Cardiac septum (tissue), 1 donor: ENCODE measurements at regions of chr20 and their contacts with region 1.

Region 1: GRCh38 chr20:21505161-21505809 is 8.6 kb downstream of the NKX2-2 start:
- DNase-seq: peak; percentile 86

Region 2: GRCh38 chr20:20837574-20838021 is 667.7 kb before region 1 on chr20:
- intact Hi-C with region 1: loop called (anchors 2 kb)
- DNase-seq: no peak

Region 3: DNA sequence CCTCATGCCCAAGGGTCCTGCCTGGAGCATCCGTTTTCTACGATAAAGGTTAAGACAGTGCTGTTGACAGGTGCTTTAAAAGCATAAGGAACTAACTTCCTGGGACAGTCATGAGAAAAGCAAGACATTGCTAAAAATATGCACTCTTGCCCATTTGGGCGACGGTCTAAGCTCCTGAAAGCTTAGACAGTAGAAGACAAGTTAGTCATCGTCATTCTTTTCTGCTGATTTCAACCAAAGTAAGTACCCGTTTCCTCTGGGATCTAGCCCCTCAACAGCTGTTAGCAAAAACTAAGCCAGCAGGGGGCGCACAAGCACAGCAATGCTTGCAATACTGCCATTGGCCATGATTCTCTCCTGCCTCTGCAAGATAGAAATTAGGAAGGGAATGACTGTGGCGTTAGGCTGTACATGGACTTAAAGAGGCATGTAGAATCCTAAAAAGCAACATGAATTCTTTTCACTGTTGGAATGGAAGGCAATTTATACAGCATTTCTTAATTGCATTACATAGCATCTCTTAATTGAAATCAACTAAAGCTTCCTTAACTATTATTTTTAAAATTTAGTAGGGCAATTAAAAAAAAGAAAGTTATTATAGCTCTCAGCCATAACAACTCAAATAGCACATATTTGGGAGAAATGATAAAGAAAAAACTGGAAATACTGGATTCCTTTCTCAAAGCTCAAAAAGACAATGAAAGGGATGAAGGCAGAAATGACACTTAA is 645.0 kb before region 1 on chr20:
- intact Hi-C with region 1: loop called (anchors 5 kb)
- DNase-seq: peak; percentile 93

Region 4: DNA sequence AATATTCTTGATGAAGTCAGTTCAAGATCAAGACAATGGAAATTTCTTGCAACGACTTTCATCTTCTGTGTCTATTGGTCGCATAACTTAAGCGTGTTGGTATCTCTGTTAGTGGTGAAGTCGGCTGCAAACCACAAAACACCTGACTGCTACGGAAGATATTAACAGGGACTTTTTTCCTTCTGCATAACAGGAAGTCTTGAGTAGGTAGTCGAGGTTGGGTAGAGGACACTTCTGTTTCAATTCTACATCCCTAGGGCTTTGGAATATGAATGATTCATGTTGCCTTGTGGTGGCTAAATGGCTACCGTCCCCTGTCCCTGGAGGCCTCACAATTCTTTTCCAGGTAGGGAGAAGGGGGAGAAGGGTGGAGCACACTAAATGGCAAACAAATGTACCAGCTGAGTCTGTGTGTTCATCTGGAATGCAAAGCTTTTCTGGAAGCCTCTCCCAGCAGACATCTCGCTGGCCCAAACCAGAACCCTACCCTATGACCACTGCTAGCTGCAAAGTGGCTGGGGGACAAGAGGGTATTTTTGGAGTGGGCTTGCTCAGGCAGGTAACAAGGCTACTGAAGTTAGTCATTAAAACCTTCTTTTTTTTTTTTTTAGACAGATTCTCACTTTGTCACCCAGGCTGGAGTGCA is 43.2 kb after region 1 on chr20:
- intact Hi-C with region 1: no loop called
- DNase-seq: no peak

Region 5: DNA sequence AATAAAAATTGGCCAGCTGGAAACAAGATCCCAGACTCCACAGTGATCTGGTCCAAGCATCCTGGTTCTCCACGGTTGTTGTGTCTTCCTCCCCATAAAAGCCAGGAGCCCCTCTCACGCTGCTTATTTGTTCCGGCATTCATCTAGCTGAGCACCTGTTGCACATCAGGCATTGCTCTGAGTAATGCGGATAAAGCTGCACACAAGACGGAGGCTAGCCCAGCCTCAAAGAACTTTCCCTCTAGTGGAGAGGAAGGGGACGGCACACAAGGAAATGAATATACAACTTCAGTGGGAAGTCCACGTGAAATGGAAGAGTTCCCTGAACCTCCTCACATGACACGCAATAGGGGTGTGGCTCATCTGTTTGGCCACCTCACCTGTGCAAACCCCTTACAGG is 1815.0 kb after region 1 on chr20:
- intact Hi-C with region 1: no loop called
- DNase-seq: no peak